Heart right ventricle (tissue), 16 donors: ENCODE measurements at regions of chrX and their contacts with region 1.

Region 1: DNA sequence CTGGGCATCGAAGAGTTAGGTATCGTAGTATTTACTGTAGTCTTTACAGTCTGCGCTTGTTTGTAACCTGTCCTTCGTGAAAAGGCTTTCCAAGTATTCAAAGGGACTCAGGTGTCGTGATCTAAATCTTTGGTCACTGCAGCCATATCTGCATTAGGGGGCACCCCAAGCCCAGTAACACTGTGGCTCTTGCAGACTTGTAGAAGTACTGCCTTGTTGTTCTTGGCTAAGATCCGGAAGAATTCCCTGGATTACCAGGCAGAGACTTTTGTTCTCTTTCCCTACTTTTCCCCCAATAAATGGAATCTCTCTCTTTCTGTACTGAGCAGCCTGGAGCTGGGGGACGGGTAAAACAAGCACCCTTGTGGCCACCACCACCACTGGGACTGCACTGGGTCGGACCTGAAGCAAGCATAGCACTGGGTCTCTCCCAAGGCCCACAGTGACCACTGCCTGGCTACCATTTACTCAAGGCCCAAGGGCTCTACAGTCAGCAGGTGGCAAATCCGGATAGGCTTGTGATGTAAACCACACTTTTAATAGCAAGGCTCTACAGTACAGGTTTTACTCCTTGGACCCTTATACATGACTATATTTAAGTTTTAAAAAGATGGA is 12.0 kb downstream of the CXorf58 start:
- DNase-seq: no peak
- ATAC-seq: no peak
- H3K4me3 ChIP-seq: no peak overlapping the region
- H3K27ac ChIP-seq: no peak overlapping the region
- H3K4me1 ChIP-seq: no peaks in the 10 kb centered on the region
- H3K27me3 ChIP-seq: peaks cover 0 to 72% (median 0%) of the 10 kb centered on the region in 7 donors
- CTCF ChIP-seq: peak in 2 of 9 donors; percentile 6 to 13

Region 2: DNA sequence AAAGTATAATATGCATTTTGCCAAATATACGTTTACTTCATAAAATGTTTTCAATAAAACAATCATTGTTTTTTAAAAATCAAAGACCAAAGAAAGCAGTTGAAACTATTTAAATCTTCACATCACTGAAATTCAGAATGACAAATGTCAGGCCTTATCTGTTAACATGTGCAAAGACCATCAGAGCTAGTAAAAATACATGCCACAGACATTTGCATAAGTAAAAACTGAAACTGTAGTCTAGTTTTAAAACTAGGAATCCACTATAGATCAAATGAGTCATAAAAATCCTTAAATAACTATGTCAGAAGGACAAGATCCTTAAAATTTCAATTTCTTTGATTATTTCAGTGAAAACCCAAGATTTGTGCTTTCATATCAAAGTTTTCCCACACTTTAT is 82.4 kb after region 1 on chrX:
- intact Hi-C with region 1: loop called in 1 of 10 experiments (anchors 10 kb)
- DNase-seq: no peak
- ATAC-seq: no peak
- H3K4me3 ChIP-seq: no peak overlapping the region
- H3K27ac ChIP-seq: no peak overlapping the region
- H3K4me1 ChIP-seq: no peaks in the 10 kb centered on the region
- H3K27me3 ChIP-seq: peaks cover 0 to 62% (median 0%) of the 10 kb centered on the region in 7 donors
- CTCF ChIP-seq: no peak